Ovary (tissue), 10 donors: ENCODE measurements at regions of chr16 and their contacts with region 1.

Region 1: GRCh38 chr16:67279296-67280089 is at the start of gene PLEKHG4:
- DNase-seq: peak; percentile 71 to 88 (median 79)
- H3K4me3 ChIP-seq: peak within 1 kb of the TSS; percentile 54
- H3K27ac ChIP-seq: peak within 1 kb of the TSS; percentile 55 to 59
- H3K4me1 ChIP-seq: peaks cover 12% of the 10 kb centered on the region
- H3K27me3 ChIP-seq: no peaks in the 10 kb centered on the region
- CTCF ChIP-seq: peak; percentile 47 to 92 (median 91)
- EP300 ChIP-seq: no peak
- POLR2A ChIP-seq: peak; percentile 19
- total RNA-seq, gene PLEKHG4: 12.4 to 37.9 (median 27.6) TPM

Region 2: DNA sequence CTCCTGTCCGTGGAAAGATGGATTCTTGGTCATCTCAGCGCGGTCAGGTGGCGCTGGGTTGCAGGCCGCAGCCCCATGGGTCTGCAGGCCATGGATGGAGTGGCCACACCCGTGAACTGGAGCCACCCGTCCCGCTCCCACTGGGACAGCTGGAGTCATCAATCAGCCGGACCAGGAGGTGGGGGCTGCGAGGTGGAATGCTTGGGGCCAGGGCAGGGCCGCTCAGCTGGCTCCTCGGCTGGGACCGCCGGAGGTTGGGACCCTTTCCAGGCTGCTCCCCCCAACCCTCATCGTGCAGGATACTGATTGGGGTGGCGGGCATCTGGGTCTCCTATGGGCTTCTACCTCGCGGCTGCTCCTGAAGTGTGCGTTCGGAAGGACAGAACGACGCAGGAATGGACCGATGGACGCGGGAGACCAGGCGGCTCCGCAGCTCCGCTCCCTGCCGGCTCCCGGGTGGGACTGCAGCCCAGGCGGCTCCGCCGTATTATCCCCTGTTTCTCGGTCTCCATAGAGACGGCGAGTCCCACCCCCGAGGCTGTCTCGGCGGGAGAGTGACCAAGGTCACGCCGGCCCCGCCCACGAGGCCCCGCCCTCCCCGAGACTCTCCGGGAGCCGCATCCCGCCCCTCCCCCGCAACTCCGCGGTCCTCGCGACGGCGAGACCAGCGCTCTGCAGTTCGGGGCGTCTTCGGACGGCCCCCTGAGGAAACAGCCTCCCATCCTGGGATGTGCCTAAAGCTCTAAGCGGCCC is 113.7 kb after region 1 on chr16 and contains the start of gene TPPP3:
- intact Hi-C with region 1: loop called in 2 of 4 experiments (anchors 5 to 10 kb)
- DNase-seq: peak; percentile 85 to 94 (median 93)
- H3K4me3 ChIP-seq: peak within 1 kb of the TSS; percentile 32
- H3K27ac ChIP-seq: no peak within 1 kb of the TSS
- H3K4me1 ChIP-seq: peaks cover 10% of the 10 kb centered on the region
- H3K27me3 ChIP-seq: no peaks in the 10 kb centered on the region
- CTCF ChIP-seq: peak; percentile 58 to 79 (median 62)
- EP300 ChIP-seq: no peak
- POLR2A ChIP-seq: peak; percentile 33
- total RNA-seq, gene TPPP3: 2.2 to 269 (median 10.9) TPM

Region 3: DNA sequence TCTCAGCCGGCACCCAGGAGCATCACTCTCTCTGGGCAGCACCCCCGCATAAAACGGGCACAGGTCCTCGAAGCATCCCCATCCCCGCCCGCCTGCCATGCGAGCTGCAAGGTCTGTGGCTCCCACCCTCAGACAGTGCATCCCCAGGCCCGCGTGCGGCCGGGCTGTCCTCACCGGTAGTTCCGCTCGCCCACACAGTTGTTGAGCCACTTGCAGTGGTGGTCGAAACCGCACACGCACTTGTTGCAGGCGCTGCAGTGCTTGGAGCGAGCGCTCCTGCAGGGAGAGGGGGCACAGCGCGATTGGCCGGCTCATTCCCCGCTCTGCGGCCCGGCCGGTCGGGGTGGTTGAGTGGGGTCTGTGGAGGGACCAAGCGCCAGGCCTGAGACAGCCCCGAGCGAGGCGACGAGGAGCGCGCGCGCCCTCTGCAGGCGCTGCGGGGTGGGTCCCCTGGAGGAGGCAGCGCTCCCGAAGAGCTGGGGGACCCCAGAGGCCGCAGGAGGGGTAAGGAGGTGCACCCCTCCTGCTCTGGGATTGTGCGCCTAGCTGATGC is 119.8 kb after region 1 on chr16:
- intact Hi-C with region 1: loop called in 2 of 4 experiments (anchors 5 to 10 kb)
- DNase-seq: peak; percentile 55 to 78 (median 69)
- H3K4me3 ChIP-seq: no peak overlapping the region
- H3K27ac ChIP-seq: no peak overlapping the region
- H3K4me1 ChIP-seq: peaks cover 3% of the 10 kb centered on the region
- H3K27me3 ChIP-seq: no peaks in the 10 kb centered on the region
- CTCF ChIP-seq: peak; percentile 48 to 72 (median 59)
- EP300 ChIP-seq: no peak
- POLR2A ChIP-seq: no peak

Region 4: GRCh38 chr16:67406111-67406890 is 126.8 kb after region 1 on chr16:
- intact Hi-C with region 1: loop called in 1 of 4 experiments (anchors 5 kb)
- DNase-seq: peak in 2 of 5 donors; percentile 42 to 63
- H3K4me3 ChIP-seq: no peak overlapping the region
- H3K27ac ChIP-seq: no peak overlapping the region
- H3K4me1 ChIP-seq: no peaks in the 10 kb centered on the region
- H3K27me3 ChIP-seq: no peaks in the 10 kb centered on the region
- CTCF ChIP-seq: no peak
- EP300 ChIP-seq: no peak
- POLR2A ChIP-seq: no peak

Region 5: DNA sequence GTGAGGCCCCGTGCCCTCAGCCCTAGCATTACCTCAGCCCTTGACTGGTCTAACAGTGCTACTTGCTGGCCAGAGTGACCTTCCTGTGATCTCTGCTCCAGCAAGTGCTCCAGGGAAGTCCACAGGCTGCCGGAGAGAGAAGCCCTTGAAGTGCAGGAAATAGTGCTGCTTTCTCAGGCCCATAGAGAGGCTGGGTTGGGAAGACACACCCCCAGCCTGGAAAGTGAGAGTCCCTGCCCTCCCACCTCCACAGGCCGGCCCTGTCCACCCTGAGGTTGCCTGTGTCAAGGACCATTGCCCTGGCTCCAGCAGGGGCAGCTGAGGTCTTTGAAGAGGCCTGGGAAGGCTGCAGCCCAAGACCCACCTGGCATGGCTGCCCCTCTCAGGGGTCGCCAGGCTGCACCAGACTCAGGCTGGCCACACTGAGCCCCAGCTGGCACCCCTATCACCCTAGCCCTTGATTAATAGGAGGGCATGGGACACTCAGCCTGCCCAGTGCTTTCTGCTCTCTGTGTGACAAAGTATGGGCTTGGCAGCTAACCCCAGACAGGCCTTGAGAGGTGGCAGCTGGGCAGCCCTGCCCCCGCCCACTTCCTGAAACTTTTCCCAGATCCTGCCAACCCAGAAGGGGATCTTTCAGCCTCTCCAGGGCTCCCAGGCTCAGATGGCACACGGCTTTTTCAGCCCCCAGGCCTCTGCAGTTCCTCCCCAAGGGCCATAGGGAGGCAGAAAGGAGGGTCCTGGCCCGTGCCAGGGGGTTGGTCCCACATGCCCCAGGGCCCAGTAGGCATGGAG is 179.8 kb after region 1 on chr16:
- intact Hi-C with region 1: loop called in 1 of 4 experiments (anchors 10 kb)
- DNase-seq: peak in 1 of 5 donors; percentile 54
- H3K4me3 ChIP-seq: no peak overlapping the region
- H3K27ac ChIP-seq: peak overlapping the region; percentile 31 to 76
- H3K4me1 ChIP-seq: peaks cover 45% of the 10 kb centered on the region
- H3K27me3 ChIP-seq: no peaks in the 10 kb centered on the region
- CTCF ChIP-seq: no peak
- EP300 ChIP-seq: no peak
- POLR2A ChIP-seq: no peak